ENCODE measurements at regions of chr7 and their contacts with region 1.

Region 1: GRCh38 chr7:154953006-154953684 is 49.8 kb downstream of the PAXIP1 start:
- DNase-seq: peak; percentile 70 to 90
- ATAC-seq: no peak
- H3K4me3 ChIP-seq: no peak overlapping the region
- H3K27ac ChIP-seq: no peak overlapping the region
- H3K4me1 ChIP-seq: no peaks in the 10 kb centered on the region
- H3K27me3 ChIP-seq: no peaks in the 10 kb centered on the region

Region 2: DNA sequence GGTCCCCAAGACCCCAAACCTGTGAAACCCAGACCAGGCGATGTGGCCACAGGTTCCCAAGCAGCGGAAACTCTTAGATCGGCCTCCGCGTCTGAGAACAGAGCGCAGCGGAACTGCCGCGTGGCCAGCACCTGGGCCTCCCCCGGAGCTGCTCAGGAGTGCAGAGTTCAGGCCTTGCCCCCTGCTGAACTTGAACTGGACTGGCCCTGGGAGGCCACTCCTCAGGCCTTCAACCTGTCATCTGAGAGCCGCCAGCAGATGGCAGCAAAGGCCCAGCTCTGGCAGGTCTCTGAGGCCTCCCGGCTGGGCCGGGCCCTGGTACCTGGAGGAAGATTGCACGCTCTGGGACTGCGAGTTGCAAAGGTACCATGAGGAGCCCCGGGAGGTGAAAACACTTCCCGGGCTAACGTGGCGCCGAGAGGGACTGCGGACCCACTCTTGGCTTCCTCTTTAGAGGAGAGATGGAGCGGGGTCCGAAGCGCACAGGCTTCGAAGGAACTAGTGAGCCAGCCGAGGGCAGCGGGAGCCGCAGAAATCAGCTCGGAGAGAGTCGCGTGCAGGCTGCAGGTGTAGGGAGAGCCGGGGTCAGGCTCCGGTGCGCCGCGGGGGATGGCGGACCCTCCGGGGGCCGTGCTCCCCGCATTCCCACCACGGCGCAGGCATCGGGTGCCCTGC is 39.4 kb before region 1 on chr7:
- intact Hi-C with region 1: loop called in 1 of 2 experiments (anchors 5 kb)
- DNase-seq: peak; percentile 89 to 98
- ATAC-seq: peak; percentile 88
- H3K4me3 ChIP-seq: no peak overlapping the region
- H3K27ac ChIP-seq: no peak overlapping the region
- H3K4me1 ChIP-seq: no peaks in the 10 kb centered on the region
- H3K27me3 ChIP-seq: no peaks in the 10 kb centered on the region